PC-9 (cell line): ENCODE measurements at regions of chr9 and their contacts with region 1.

Region 1: DNA sequence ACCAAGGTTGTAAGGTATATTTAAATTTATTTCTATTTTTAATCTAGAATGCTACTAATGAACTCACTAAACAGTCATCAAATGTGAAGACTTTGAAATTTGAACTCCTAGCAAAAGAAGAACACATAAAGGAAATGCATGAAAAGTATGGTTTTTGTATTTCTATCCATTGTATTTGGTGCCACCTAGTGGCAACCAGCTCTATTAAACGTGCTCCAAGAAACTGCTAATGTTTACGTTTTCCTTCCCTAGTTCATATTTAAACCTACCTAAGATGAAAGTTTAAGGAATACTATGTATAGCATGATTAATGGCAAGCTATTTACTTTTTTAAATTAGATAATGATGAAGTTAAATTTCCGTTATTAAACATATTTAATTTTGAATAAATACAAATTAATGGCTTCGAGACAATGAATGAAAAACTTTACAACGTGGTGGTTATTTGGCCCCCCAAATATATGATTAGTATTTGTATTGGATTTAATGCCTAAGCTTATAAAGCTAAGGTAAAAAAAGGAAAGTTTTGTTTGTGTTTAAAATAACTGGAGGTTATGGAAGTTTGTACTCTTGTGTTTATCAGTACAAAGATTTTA is 115.9 kb upstream of the SH3GL2 start:
- DNase-seq: peak in 1 of 2 experiments; percentile 36
- H3K4me3 ChIP-seq: no peak overlapping the region
- H3K27ac ChIP-seq: no peak overlapping the region
- H3K4me1 ChIP-seq: no peaks in the 10 kb centered on the region
- H3K27me3 ChIP-seq: no peaks in the 10 kb centered on the region
- CTCF ChIP-seq: peak; percentile 79

Region 2: GRCh38 chr9:15837079-15837679 is 1625.8 kb before region 1 on chr9:
- CTCF ChIA-PET with region 1: no interaction called
- POLR2A ChIA-PET with region 1: no interaction called
- intact Hi-C with region 1: loop called (anchors 2 kb)
- DNase-seq: peak in 1 of 2 experiments; percentile 3
- H3K4me3 ChIP-seq: no peak overlapping the region
- H3K27ac ChIP-seq: no peak overlapping the region
- H3K4me1 ChIP-seq: no peaks in the 10 kb centered on the region
- H3K27me3 ChIP-seq: no peaks in the 10 kb centered on the region
- CTCF ChIP-seq: peak; percentile 80

Region 3: DNA sequence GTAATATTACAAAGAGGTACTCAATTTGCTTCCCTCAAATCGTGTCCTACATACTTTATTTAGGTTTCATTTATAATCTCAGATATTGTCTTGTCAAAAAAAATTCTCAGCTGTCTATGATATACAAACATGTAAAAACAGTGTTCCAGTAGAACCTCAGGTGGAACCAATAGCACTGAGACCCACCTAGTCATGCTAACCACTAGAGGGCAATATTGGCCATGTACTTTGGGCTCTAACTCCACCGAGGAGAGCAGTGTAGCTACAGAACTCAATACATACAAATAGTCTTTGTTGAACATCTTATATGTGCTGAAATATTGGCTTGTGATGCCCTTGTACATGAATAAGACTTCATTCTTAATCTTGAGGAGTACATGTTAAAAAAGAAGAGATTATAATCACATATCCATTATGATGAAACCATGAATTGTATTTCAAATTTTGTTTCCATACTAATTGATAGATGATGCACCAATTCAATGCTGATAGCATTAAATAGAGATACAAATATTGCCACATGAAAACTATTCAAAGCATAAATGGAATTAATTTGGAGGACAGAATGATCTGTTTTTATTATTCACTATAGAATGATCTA is 399.3 kb before region 1 on chr9:
- CTCF ChIA-PET with region 1: no interaction called
- POLR2A ChIA-PET with region 1: no interaction called
- intact Hi-C with region 1: loop called (anchors 2 kb)
- DNase-seq: peak in 1 of 2 experiments; percentile 0
- H3K4me3 ChIP-seq: no peak overlapping the region
- H3K27ac ChIP-seq: no peak overlapping the region
- H3K4me1 ChIP-seq: no peaks in the 10 kb centered on the region
- H3K27me3 ChIP-seq: no peaks in the 10 kb centered on the region
- CTCF ChIP-seq: peak; percentile 69

Region 4: GRCh38 chr9:17116400-17116837 is 346.5 kb before region 1 on chr9:
- CTCF ChIA-PET with region 1: no interaction called
- POLR2A ChIA-PET with region 1: no interaction called
- intact Hi-C with region 1: loop called (anchors 2 kb)
- DNase-seq: peak in 1 of 2 experiments; percentile 42
- H3K4me3 ChIP-seq: no peak overlapping the region
- H3K27ac ChIP-seq: no peak overlapping the region
- H3K4me1 ChIP-seq: no peaks in the 10 kb centered on the region
- H3K27me3 ChIP-seq: no peaks in the 10 kb centered on the region
- CTCF ChIP-seq: peak; percentile 66